GM12878 (cell line): ENCODE measurements at regions of chr21 and their contacts with region 1.

Region 1: DNA sequence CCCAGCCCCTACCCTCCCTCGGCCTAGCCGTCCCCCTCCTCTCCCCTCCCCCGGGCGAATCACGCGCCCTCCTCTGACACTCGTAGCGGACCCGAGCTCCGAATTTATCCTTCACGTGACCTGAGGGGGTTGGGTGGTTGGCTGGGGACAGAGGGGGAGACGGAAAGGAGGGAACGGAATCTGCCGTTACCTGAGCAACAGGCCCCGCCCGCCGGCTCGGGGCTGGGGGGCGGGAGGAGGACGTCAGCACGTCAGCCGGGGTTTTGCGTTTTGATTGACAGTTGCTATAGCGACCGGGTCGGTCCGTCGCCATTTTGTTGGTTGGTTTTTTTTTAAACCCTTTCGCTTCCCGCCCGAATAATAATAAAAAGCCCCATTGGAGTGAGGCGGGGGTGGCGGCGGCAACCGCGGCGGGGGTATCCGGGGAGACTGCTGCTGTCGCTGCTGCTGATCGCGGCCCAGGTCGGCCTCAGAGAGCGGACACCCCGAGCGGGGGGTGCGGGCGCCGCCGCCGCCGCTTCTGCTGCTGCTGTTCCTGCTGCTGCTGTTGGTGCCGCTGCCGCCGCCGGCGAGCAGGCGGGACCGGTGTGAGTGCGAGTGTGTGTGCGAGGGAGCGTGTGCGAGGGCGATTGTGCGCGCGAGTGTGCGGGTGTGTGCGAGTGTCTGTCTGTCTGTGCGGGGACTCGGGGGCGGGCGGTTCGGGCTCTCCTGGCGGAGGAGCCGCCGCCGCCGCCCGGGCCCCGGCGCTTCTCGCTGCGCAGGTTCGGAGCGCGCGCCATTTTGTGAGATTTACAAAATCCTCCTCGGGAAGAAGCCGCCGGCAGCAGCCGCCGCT is at the start of gene DYRK1A:
- DNase-seq: peak; percentile 93
- ATAC-seq: peak; percentile 80
- H3K4me3 ChIP-seq: peak within 1 kb of the TSS; percentile 89
- H3K27ac ChIP-seq: peak within 1 kb of the TSS; percentile 97
- H3K4me1 ChIP-seq: peaks cover 8% of the 10 kb centered on the region; the same call in 1 of the 2 replicates
- H3K27me3 ChIP-seq: no peaks in the 10 kb centered on the region
- CTCF ChIP-seq: no peak
- EP300 ChIP-seq: peak in 1 of 2 experiments; percentile 59; a peak in 2 of 4 replicates
- POLR2A ChIP-seq: peak; percentile 85
- RAD21 ChIP-seq: no peak
- polyA plus RNA-seq, gene DYRK1A: 4.8 to 9.1 TPM

Region 2: DNA sequence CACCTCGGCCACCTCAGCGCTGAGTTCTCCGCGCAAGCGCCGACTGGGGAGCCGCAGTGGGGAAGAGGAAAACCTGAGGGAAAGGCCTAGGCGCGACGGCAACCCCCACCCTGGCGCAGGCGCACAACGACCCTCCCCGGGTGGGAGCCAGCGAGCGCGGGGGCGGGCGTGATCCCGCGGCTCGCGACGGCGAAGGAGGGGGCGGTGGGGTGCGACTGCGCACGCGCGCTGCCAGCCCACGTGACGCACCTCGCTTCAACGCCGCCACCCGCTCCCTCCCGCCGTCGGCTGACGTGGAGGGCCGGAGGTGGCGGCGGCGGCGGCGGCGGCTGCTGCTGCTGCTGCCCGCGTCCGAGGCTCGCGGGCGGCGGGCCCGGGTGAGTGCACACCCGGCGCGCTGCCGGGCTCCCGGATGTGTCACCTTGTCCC is 293.7 kb before region 1 on chr21 and contains the starts of genes PIGP and TTC3:
- CTCF ChIA-PET with region 1: no interaction called
- POLR2A ChIA-PET with region 1: no interaction called
- RAD21 ChIA-PET with region 1: no interaction called
- SMC1A ChIA-PET with region 1: no interaction called
- in situ Hi-C with region 1: no loop called
- intact Hi-C with region 1: loop called (anchors 2 kb)
- DNase-seq: peak; percentile 70
- ATAC-seq: peak; percentile 78
- H3K4me3 ChIP-seq: peak within 1 kb of the TSS; percentile 90
- H3K27ac ChIP-seq: peak within 1 kb of the TSS; percentile 96
- H3K4me1 ChIP-seq: no peaks in the 10 kb centered on the region; the same call in 1 of the 2 replicates
- H3K27me3 ChIP-seq: no peaks in the 10 kb centered on the region
- CTCF ChIP-seq: no peak
- EP300 ChIP-seq: no peak
- POLR2A ChIP-seq: peak; percentile 87
- RAD21 ChIP-seq: no peak
- polyA plus RNA-seq, gene PIGP: 59.4 to 65.0 TPM
- polyA plus RNA-seq, gene TTC3: 23.1 to 28.6 TPM

Region 3: DNA sequence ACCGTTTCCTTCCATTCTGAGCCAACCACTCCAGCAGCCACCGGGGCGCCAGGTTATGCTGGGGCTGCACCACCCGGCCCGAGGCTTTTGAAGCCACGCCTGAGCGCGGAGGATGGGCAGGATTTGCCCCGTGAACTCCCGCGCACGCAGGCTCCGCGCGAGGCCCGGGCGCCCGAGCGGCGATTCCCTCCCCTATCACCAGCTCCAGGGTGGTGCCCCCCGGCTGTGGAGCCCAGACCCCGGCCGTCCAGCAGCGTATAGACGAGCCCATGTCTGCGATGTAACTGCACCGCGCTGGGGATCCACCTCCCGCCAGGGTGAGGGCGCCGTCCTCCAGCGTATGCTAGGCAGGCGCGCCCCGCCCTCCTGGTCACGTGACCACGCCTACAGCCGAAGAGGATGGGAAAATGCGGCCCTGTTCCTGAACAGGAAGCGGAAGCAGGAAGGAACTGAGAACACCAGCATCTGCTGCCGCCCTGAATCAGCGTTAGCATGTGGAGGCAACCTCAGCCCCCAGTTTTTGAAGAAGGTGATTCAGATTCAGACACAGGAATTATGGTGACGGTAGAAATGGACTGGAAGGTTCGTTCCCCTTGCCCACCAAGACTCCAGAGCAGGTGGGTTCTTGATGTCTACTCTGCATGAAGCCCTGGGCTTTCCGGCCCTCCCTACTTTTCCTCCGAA is 145.6 kb before region 1 on chr21:
- CTCF ChIA-PET with region 1: interaction called, 5 read pairs
- POLR2A ChIA-PET with region 1: no interaction called
- RAD21 ChIA-PET with region 1: interaction called, 3 read pairs
- SMC1A ChIA-PET with region 1: no interaction called
- in situ Hi-C with region 1: no loop called
- intact Hi-C with region 1: loop called (anchors 2 kb)
- DNase-seq: peak; percentile 86
- ATAC-seq: peak; percentile 96
- H3K4me3 ChIP-seq: peak overlapping the region; percentile 91
- H3K27ac ChIP-seq: peak overlapping the region; percentile 73
- H3K4me1 ChIP-seq: peaks cover 9% of the 10 kb centered on the region
- H3K27me3 ChIP-seq: no peaks in the 10 kb centered on the region
- CTCF ChIP-seq: peak; percentile 54 to 84 (median 62)
- EP300 ChIP-seq: no peak
- POLR2A ChIP-seq: peak; percentile 92
- RAD21 ChIP-seq: peak; percentile 77

Region 4: GRCh38 chr21:37267269-37268184 is 99.2 kb before region 1 on chr21 and contains the start of gene VPS26C:
- CTCF ChIA-PET with region 1: interaction called, 3 read pairs
- POLR2A ChIA-PET with region 1: interaction called, 11 read pairs
- RAD21 ChIA-PET with region 1: interaction called, 15 read pairs
- SMC1A ChIA-PET with region 1: interaction called, 10 read pairs
- in situ Hi-C with region 1: no loop called
- intact Hi-C with region 1: loop called (anchors 1 kb)
- DNase-seq: peak; percentile 99
- ATAC-seq: peak; percentile 95
- H3K4me3 ChIP-seq: peak within 1 kb of the TSS; percentile 84
- H3K27ac ChIP-seq: peak within 1 kb of the TSS; percentile 94
- H3K4me1 ChIP-seq: no peaks in the 10 kb centered on the region
- H3K27me3 ChIP-seq: no peaks in the 10 kb centered on the region
- CTCF ChIP-seq: no peak
- EP300 ChIP-seq: peak; percentile 43 to 49; a peak in 1 of 4 replicates
- POLR2A ChIP-seq: peak; percentile 96
- RAD21 ChIP-seq: no peak
- polyA plus RNA-seq, gene VPS26C: 36.8 to 39.6 TPM

Region 5: GRCh38 chr21:37338671-37339551 is 27.8 kb before region 1 on chr21:
- CTCF ChIA-PET with region 1: no interaction called
- POLR2A ChIA-PET with region 1: no interaction called
- RAD21 ChIA-PET with region 1: no interaction called
- SMC1A ChIA-PET with region 1: no interaction called
- in situ Hi-C with region 1: no loop called
- intact Hi-C with region 1: no loop called
- DNase-seq: no peak
- ATAC-seq: no peak
- H3K4me3 ChIP-seq: no peak overlapping the region
- H3K27ac ChIP-seq: no peak overlapping the region
- H3K4me1 ChIP-seq: no peaks in the 10 kb centered on the region
- H3K27me3 ChIP-seq: no peaks in the 10 kb centered on the region
- CTCF ChIP-seq: no peak
- EP300 ChIP-seq: no peak
- POLR2A ChIP-seq: no peak
- RAD21 ChIP-seq: no peak

Region 6: GRCh38 chr21:37407719-37408420 is 41.2 kb after region 1 on chr21:
- CTCF ChIA-PET with region 1: interaction called, 5 read pairs
- POLR2A ChIA-PET with region 1: interaction called, 6 read pairs
- RAD21 ChIA-PET with region 1: interaction called, 14 read pairs
- SMC1A ChIA-PET with region 1: interaction called, 62 read pairs
- in situ Hi-C with region 1: no loop called
- intact Hi-C with region 1: loop called (anchors 5 kb)
- DNase-seq: peak; percentile 43
- ATAC-seq: peak; percentile 75
- H3K4me3 ChIP-seq: peak overlapping the region; percentile 0; the same call in 1 of the 2 replicates
- H3K27ac ChIP-seq: peak overlapping the region; percentile 39
- H3K4me1 ChIP-seq: peaks cover 47% of the 10 kb centered on the region
- H3K27me3 ChIP-seq: no peaks in the 10 kb centered on the region
- CTCF ChIP-seq: no peak
- EP300 ChIP-seq: no peak
- POLR2A ChIP-seq: no peak
- RAD21 ChIP-seq: no peak

Region 7: DNA sequence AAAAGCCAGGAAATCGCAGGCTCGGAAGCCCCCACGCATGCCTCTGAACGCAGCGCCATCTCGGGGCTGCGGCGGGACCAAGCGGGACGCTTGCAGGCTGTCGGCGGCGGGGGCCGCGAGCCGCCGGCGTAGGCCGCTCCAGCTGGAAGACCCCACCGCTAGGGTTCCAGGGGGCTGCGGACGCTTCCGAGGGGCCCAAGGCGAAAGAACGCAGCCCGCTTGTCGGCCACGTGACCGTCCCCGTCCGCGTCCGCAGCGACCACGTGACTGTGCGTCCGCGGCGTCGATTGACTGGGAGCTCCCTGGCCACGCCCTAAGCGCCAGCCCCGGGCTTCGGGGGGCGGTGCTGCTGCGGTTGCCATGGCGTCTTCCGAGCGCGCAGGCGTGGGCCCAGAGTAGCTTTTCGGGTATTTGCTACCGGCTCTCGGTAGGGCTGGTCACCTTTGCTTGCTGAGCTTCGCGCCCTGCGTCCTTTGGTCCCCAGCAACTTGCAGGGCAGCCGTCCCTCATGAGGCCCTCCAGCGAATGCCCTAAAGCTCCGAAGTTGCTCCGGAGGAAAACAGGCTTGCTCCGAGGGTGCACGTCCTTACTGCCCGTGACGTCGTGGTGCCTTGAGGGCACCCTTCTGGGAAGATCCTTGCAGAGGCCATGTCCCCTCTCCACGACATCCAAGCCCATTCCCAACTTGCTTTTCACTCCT is 197.1 kb after region 1 on chr21:
- CTCF ChIA-PET with region 1: interaction called, 8 read pairs
- POLR2A ChIA-PET with region 1: interaction called, 3 read pairs
- RAD21 ChIA-PET with region 1: interaction called, 17 read pairs
- SMC1A ChIA-PET with region 1: no interaction called
- in situ Hi-C with region 1: no loop called
- intact Hi-C with region 1: no loop called
- DNase-seq: peak; percentile 70
- ATAC-seq: peak; percentile 97
- H3K4me3 ChIP-seq: peak overlapping the region; percentile 76
- H3K27ac ChIP-seq: peak overlapping the region; percentile 79
- H3K4me1 ChIP-seq: peaks cover 17% of the 10 kb centered on the region
- H3K27me3 ChIP-seq: no peaks in the 10 kb centered on the region
- CTCF ChIP-seq: peak; percentile 39 to 48 (median 41); a peak in 4 of 6 replicates
- EP300 ChIP-seq: no peak
- POLR2A ChIP-seq: peak; percentile 92
- RAD21 ChIP-seq: peak; percentile 23; the same call in 1 of the 2 replicates